ENCODE measurements at regions of chr1 and their contacts with region 1.

Region 1: DNA sequence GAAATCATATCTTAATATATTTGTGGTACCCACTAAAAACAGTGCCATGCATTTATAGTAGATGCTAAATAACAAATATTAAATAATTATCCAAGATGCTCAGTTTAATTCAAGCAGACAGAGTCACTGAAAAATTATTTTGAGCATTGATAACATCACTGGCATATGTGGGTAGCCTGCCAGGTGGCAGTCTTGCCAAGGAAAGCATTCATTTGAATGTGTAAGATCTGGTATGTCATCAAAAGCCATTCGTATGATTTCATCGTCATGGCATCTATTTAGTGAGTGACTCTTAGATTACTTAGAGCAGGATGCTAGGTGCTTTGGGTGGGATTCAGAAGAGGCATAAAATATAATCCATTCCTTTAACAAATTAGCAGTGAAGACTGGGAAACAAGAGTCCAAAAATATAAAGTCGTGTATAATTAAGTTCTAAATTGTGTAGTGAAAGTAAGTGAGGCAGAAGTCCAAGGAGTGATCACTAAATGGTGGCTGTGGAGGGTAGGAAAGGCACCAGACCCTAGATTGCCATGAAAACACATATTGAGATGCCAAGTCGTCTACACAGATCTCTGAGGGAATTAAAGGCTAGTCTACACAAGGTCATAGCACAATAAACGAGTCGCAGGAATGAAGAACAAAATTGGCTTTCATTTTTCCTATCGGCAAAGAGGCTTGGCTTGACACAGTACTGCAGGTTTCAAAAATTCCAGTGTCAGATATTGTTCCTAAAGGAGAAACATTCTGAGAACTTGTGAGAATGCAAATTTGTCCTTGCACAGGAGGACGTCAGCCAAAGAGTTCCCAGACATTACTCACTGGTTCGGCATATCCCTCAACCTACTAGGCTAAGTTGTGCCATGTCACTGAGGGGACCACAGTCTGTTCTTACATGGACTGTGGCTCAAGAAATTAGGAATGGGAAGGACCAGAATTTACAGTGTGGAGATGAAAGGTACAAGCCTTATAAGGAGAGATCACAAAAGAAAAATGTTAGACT is 130.8 kb downstream of the LYPLAL1 start:
- DNase-seq: peak; percentile 86
- H3K4me3 ChIP-seq: no peak overlapping the region
- H3K27ac ChIP-seq: peak overlapping the region; percentile 94
- H3K4me1 ChIP-seq: peaks cover 35% of the 10 kb centered on the region
- H3K27me3 ChIP-seq: no peaks in the 10 kb centered on the region
- CTCF ChIP-seq: peak in 1 of 2 donors; percentile 4
- POLR2A ChIP-seq: no peak

Region 2: DNA sequence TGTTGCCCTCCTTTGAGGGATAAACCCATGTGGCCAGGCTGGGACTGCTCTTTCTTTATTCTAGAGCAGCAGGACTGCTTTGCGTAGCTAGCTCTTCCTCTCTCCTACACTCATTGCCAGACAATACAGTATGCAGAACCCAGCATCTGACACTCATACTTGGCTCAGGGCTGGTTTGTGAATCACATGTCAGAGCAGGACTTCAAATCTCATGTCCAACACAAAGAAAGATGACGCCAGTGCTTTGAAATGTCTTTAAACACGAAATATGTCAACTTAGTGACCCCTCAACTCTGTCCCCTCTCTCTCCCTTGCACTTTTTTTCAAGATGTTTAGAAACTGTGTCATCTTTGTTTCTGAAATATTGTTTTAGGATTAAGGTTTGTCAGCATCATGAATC is 824.4 kb before region 1 on chr1:
- CTCF ChIA-PET with region 1: no interaction called
- POLR2A ChIA-PET with region 1: no interaction called
- dilution Hi-C with region 1: no loop called
- intact Hi-C with region 1: loop called (anchors 2 kb)
- DNase-seq: peak; percentile 93
- H3K4me3 ChIP-seq: no peak overlapping the region
- H3K27ac ChIP-seq: peak overlapping the region; percentile 100
- H3K4me1 ChIP-seq: peaks cover 33% of the 10 kb centered on the region
- H3K27me3 ChIP-seq: no peaks in the 10 kb centered on the region
- CTCF ChIP-seq: no peak
- POLR2A ChIP-seq: no peak

Region 3: DNA sequence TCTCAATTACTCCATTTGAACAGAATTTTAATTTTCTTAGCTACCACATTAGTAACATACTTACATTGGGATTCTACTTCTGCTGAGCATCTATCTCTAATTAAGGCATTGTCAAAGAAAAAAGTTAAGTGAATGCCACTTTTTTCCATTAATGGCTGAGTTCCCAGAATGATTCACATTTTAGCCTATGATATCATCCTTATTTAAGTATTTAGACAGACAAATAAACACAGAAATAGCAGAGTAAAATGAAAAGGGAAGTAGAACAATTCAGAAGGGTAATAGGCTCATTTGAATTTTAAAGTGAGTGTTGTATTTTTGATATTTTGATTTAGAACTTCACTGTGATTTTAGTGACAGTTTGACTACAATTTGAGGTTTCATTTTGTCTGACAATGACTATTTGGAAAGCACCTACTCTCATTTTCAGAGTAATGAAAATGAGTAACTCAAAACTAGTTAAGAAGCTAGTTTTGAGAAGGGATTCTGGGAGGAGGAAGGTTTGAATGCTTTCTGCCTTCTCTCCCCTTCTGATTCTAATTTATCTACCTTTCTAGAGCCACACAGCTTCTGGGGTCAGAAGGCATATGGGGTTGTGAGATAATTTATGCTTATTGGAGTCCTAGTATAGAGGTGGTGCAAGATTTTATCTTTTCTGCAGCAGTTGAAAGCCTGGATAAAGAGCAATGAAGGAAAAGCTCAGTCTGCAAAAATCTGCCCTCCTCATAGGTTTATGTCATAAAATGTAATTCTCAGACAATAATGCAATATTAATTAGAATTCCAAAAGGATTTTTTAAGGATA is 115.3 kb before region 1 on chr1:
- CTCF ChIA-PET with region 1: interaction called, 6 read pairs
- POLR2A ChIA-PET with region 1: no interaction called
- dilution Hi-C with region 1: no loop called
- intact Hi-C with region 1: loop called (anchors 5 kb)
- DNase-seq: peak; percentile 96
- H3K4me3 ChIP-seq: peak overlapping the region in 1 of 3 experiments; percentile 21
- H3K27ac ChIP-seq: peak overlapping the region; percentile 70
- H3K4me1 ChIP-seq: peaks cover 26% of the 10 kb centered on the region
- H3K27me3 ChIP-seq: no peaks in the 10 kb centered on the region
- CTCF ChIP-seq: no peak
- POLR2A ChIP-seq: no peak

Region 4: DNA sequence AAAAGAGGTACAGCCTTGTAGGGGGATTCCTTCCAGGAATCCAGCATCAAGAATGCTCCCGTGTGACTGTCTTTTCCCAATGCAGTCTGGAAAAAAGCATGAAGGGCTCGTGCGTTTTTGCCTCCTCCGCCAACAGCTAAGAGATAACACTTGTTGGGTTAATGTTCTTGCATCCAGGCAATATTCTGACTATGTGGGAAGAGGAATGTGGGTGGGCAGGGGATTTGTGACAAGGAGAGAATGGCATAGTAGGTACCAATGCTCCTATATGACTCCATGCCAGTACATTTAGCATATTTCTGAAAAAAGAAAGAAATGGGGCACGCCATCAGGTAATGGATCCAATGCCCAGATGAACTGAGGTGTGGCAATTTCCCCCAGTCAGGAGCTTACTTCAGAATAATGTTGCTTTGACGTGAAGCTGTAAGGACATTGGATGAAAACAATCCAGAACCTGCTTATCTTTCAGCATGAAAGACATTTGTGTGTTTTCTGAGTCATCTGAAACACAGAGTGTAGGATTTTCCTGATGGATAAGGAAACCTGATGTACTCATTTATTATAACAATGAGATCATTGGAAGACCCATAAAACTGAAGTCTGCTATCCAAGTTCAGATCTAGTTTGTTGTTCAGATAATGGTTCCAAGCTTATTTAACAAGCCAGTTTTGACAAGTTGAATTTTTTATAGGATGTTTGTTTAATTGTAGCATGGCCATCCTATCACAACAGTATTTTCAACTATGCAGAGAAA is 25.3 kb before region 1 on chr1:
- CTCF ChIA-PET with region 1: no interaction called
- POLR2A ChIA-PET with region 1: interaction called, 5 read pairs
- dilution Hi-C with region 1: no loop called
- intact Hi-C with region 1: loop called (anchors 1 kb)
- DNase-seq: peak; percentile 87
- H3K4me3 ChIP-seq: no peak overlapping the region
- H3K27ac ChIP-seq: peak overlapping the region; percentile 64
- H3K4me1 ChIP-seq: peaks cover 28% of the 10 kb centered on the region
- H3K27me3 ChIP-seq: no peaks in the 10 kb centered on the region
- CTCF ChIP-seq: no peak
- POLR2A ChIP-seq: no peak

Region 5: DNA sequence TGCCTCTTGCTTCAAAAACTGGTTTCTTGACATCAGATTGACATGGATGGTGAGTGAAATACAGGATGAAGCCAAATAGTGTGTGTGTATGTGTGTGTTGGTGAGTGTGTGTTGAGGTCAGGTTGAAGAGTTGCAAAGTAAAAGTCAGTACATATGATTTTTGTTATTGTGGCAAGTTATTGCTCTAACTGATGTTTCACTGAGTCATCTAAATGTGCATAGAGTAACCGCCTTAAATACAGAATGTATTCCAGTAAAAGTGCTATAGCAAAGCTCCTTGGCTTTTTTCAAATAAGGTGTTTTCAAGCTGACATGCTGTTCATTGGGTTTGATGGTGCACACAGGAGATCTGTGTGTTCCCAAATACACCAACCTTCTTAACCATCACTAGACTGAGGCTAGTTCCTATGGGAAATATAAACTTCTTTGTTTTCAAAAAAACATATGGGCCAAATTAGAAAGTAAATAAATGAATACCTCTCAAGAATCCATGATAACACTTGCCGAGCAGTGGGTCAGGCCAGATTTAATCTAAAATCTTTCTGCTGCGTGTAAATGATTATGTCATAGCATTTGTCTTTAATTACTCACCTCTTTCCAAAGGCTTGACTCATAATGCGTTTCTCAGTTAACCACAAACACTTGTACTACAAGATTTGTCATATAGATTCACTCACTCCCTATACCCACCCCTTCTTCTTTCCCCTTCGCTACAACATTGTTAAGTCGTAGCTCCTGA is 20.3 kb after region 1 on chr1:
- CTCF ChIA-PET with region 1: interaction called, 3 read pairs
- POLR2A ChIA-PET with region 1: interaction called, 3 read pairs
- dilution Hi-C with region 1: no loop called
- intact Hi-C with region 1: loop called (anchors 1 kb)
- DNase-seq: peak; percentile 83
- H3K4me3 ChIP-seq: no peak overlapping the region
- H3K27ac ChIP-seq: peak overlapping the region; percentile 78
- H3K4me1 ChIP-seq: peaks cover 44% of the 10 kb centered on the region
- H3K27me3 ChIP-seq: no peaks in the 10 kb centered on the region
- CTCF ChIP-seq: no peak
- POLR2A ChIP-seq: peak; percentile 63

Region 6: GRCh38 chr1:219385786-219386427 is 81.4 kb after region 1 on chr1:
- CTCF ChIA-PET with region 1: interaction called, 8 read pairs
- POLR2A ChIA-PET with region 1: no interaction called
- dilution Hi-C with region 1: no loop called
- intact Hi-C with region 1: loop called (anchors 1 kb)
- DNase-seq: peak; percentile 66
- H3K4me3 ChIP-seq: no peak overlapping the region
- H3K27ac ChIP-seq: no peak overlapping the region
- H3K4me1 ChIP-seq: no peaks in the 10 kb centered on the region
- H3K27me3 ChIP-seq: no peaks in the 10 kb centered on the region
- CTCF ChIP-seq: peak; percentile 70 to 81
- POLR2A ChIP-seq: no peak

Region 7: GRCh38 chr1:219660666-219661463 is 356.3 kb after region 1 on chr1:
- CTCF ChIA-PET with region 1: interaction called, 3 read pairs
- POLR2A ChIA-PET with region 1: no interaction called
- dilution Hi-C with region 1: no loop called
- intact Hi-C with region 1: loop called (anchors 1 kb)
- DNase-seq: peak; percentile 84
- H3K4me3 ChIP-seq: peak overlapping the region in 2 of 3 experiments; percentile 24 to 49
- H3K27ac ChIP-seq: no peak overlapping the region
- H3K4me1 ChIP-seq: peaks cover 2% of the 10 kb centered on the region
- H3K27me3 ChIP-seq: peaks cover 0 to 9% of the 10 kb centered on the region in 2 experiments
- CTCF ChIP-seq: peak; percentile 82 to 86
- POLR2A ChIP-seq: no peak